PC-3 (cell line): ENCODE measurements at regions of chr12 and their contacts with region 1.

Region 1: DNA sequence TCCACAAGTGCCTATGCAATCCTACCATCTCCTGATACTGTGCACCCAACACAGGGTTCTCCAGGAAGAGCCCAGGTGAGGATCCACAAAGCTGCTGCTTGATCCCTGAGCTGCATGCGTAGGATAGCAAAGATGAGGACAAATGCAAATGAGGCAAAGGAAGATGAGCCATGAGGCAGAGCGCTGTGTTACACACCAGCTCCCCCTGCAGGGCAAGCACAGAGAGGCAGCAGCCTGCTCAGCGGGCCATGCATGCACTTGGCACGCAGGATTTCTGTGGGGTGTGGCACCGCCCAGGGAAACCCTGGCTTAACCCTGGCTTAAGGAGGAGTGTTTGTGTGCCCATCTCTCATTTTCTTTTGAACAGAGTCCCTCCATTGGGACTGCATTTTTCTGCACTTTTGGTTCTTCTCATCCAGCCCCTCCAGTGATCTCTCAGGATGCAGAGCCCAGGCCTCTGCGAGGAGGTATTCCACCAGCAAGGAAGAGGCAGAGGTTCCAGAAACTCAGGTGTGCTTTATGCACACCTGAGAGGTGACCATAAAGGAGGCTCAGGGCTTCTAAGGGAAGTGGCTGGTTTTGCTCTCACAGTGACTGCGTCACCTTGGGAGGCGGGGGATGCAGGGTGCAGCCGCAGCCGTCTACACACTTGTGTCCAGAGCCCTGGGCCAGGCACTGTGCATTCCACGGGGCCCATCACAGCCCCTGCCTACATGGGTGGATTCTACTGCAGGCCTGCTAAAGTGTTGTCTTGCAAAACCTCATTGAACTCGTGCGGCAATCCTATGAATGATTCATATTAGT is 973.3 kb upstream of the TMEM132C start:
- DNase-seq: peak; percentile 93
- ATAC-seq: peak; percentile 98
- H3K4me3 ChIP-seq: no peak overlapping the region
- H3K27ac ChIP-seq: no peak overlapping the region
- H3K4me1 ChIP-seq: peaks cover 9% of the 10 kb centered on the region
- H3K27me3 ChIP-seq: no peaks in the 10 kb centered on the region
- CTCF ChIP-seq: peak; percentile 99

Region 2: GRCh38 chr12:126926023-126926594 is 367.6 kb before region 1 on chr12:
- CTCF ChIA-PET with region 1: no interaction called
- POLR2A ChIA-PET with region 1: no interaction called
- intact Hi-C with region 1: loop called (anchors 5 kb)
- DNase-seq: peak; percentile 57
- ATAC-seq: peak; percentile 87
- H3K4me3 ChIP-seq: peak overlapping the region; percentile 36
- H3K27ac ChIP-seq: no peak overlapping the region
- H3K4me1 ChIP-seq: 0 out of 2 replicates have a peak, but pooled peaks cover 4% of the 10 kb centered on the region
- H3K27me3 ChIP-seq: peaks cover 36% of the 10 kb centered on the region
- CTCF ChIP-seq: peak; percentile 62

Region 3: GRCh38 chr12:126989532-126989931 is 304.2 kb before region 1 on chr12:
- CTCF ChIA-PET with region 1: no interaction called
- POLR2A ChIA-PET with region 1: no interaction called
- intact Hi-C with region 1: no loop called
- DNase-seq: no peak
- ATAC-seq: no peak
- H3K4me3 ChIP-seq: no peak overlapping the region
- H3K27ac ChIP-seq: no peak overlapping the region
- H3K4me1 ChIP-seq: no peaks in the 10 kb centered on the region
- H3K27me3 ChIP-seq: peaks cover 55% of the 10 kb centered on the region; the same call in 1 of the 2 replicates
- CTCF ChIP-seq: no peak

Region 4: GRCh38 chr12:127150028-127150427 is 143.7 kb before region 1 on chr12:
- CTCF ChIA-PET with region 1: interaction called, 7 read pairs
- POLR2A ChIA-PET with region 1: no interaction called
- intact Hi-C with region 1: loop called (anchors 1 kb)
- DNase-seq: no peak
- ATAC-seq: no peak
- H3K4me3 ChIP-seq: no peak overlapping the region
- H3K27ac ChIP-seq: no peak overlapping the region
- H3K4me1 ChIP-seq: no peaks in the 10 kb centered on the region
- H3K27me3 ChIP-seq: no peaks in the 10 kb centered on the region
- CTCF ChIP-seq: no peak

Region 5: GRCh38 chr12:127355061-127355841 is 61.5 kb after region 1 on chr12:
- CTCF ChIA-PET with region 1: interaction called, 10 read pairs
- POLR2A ChIA-PET with region 1: no interaction called
- intact Hi-C with region 1: loop called (anchors 5 kb)
- DNase-seq: peak; percentile 76
- ATAC-seq: peak; percentile 96
- H3K4me3 ChIP-seq: no peak overlapping the region
- H3K27ac ChIP-seq: no peak overlapping the region
- H3K4me1 ChIP-seq: peaks cover 6% of the 10 kb centered on the region; the same call in 1 of the 2 replicates
- H3K27me3 ChIP-seq: no peaks in the 10 kb centered on the region
- CTCF ChIP-seq: peak; percentile 93